ENCODE measurements at regions of chr1 and their contacts with region 1.

Region 1: GRCh38 chr1:93304716-93305138 is 41.0 kb upstream of the DR1 start:
- DNase-seq: peak; percentile 12
- ATAC-seq: peak; percentile 82
- H3K4me3 ChIP-seq: no peak overlapping the region
- H3K27ac ChIP-seq: no peak overlapping the region
- H3K4me1 ChIP-seq: no peaks in the 10 kb centered on the region
- H3K27me3 ChIP-seq: no peaks in the 10 kb centered on the region
- CTCF ChIP-seq: peak; percentile 72 to 89 (median 88)
- EP300 ChIP-seq: no peak
- POLR2A ChIP-seq: no peak
- RAD21 ChIP-seq: peak; percentile 92

Region 2: GRCh38 chr1:93288558-93288957 is 16.2 kb before region 1 on chr1:
- CTCF ChIA-PET with region 1: interaction called, 10 read pairs
- POLR2A ChIA-PET with region 1: interaction called, 4 read pairs
- RAD21 ChIA-PET with region 1: no interaction called
- SMC1A ChIA-PET with region 1: interaction called, 4 read pairs
- in situ Hi-C with region 1: no loop called
- intact Hi-C with region 1: no loop called
- DNase-seq: no peak
- ATAC-seq: no peak
- H3K4me3 ChIP-seq: no peak overlapping the region
- H3K27ac ChIP-seq: no peak overlapping the region
- H3K4me1 ChIP-seq: no peaks in the 10 kb centered on the region
- H3K27me3 ChIP-seq: no peaks in the 10 kb centered on the region
- CTCF ChIP-seq: no peak
- EP300 ChIP-seq: no peak
- POLR2A ChIP-seq: no peak
- RAD21 ChIP-seq: no peak

Region 3: DNA sequence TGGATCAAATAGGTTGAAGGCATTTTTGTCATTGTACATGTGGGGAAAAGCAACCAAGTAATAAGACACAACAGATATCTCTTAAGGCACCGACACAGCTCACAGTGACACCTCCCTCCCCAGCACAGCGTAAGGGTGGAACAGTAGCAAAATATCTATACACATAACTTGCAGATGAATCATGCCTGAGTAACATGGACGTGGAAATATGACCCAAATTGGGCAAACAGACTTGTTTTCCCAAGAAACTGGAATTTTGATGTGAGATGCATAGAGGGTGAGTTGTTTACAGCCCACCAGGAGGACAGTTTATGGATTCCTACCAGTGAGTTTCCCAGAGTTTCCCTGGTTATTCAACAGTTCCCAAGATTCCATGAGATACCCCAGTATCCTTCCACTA is 33.7 kb after region 1 on chr1:
- CTCF ChIA-PET with region 1: interaction called, 15 read pairs
- POLR2A ChIA-PET with region 1: no interaction called
- RAD21 ChIA-PET with region 1: interaction called, 4 read pairs
- SMC1A ChIA-PET with region 1: interaction called, 4 read pairs
- in situ Hi-C with region 1: no loop called
- intact Hi-C with region 1: no loop called
- DNase-seq: no peak
- ATAC-seq: no peak
- H3K4me3 ChIP-seq: no peak overlapping the region
- H3K27ac ChIP-seq: no peak overlapping the region
- H3K4me1 ChIP-seq: peaks cover 4% of the 10 kb centered on the region; the same call in 1 of the 2 replicates
- H3K27me3 ChIP-seq: no peaks in the 10 kb centered on the region
- CTCF ChIP-seq: no peak
- EP300 ChIP-seq: no peak
- POLR2A ChIP-seq: no peak
- RAD21 ChIP-seq: no peak

Region 4: DNA sequence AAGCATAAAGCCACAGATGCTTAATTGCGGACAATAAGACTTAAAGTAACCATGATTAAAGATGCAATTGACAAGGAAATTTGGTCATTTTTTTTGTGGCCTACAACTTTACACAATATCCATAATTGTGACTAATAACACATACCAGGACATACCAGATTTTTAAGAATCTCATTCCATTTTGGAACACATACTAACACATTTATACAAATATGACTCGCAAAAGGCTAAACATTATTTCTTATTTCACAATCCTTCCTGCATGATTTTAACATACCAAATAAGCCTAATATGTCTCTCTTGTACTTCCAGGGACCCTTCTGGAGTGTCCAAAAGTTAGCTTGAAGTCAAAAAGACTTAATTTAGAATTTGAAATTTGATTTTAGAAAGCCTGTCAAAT is 89.8 kb after region 1 on chr1:
- CTCF ChIA-PET with region 1: interaction called, 12 read pairs
- POLR2A ChIA-PET with region 1: no interaction called
- RAD21 ChIA-PET with region 1: no interaction called
- SMC1A ChIA-PET with region 1: interaction called, 6 read pairs
- in situ Hi-C with region 1: no loop called
- intact Hi-C with region 1: no loop called
- DNase-seq: no peak
- ATAC-seq: no peak
- H3K4me3 ChIP-seq: no peak overlapping the region
- H3K27ac ChIP-seq: no peak overlapping the region
- H3K4me1 ChIP-seq: no peaks in the 10 kb centered on the region
- H3K27me3 ChIP-seq: no peaks in the 10 kb centered on the region
- CTCF ChIP-seq: no peak
- EP300 ChIP-seq: no peak
- POLR2A ChIP-seq: no peak
- RAD21 ChIP-seq: no peak

Region 5: DNA sequence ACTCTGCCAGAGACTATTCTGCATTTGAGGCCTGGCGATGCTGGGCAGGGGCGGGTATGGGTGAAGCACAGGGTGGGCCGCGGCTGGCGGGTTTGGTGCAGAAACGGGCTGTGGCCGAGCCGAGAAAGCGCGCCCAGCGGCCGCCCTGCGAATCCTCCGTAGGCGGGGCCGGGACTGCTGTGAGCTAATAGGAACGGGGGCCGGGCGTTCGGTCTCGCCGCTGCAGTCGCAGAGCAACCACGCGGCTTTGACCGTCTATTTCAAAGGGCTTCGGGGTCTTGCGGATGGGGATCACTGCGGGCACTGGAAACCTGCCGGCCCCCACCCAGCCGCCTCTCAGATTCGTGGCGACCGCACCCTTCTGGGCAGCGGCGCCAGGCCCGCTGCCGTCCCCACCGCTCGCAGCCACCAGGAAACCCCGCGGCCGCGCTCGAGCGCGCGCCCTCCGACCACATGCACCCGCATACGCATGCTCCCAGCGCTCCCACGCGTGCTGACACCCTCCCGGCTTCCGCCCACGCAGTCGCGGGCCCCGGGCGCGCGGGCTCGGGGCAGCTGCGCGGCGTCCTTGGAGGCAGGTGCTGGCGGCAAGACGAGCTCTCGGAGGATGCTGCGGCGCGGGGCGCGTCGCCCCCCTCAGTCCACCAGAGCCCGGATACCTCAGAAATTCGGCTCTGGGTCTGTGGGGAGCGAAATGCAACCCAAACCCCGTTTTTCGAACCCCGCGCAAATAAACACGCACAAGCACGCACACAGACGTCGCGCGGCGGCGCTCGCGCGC is 541.7 kb after region 1 on chr1:
- CTCF ChIA-PET with region 1: interaction called, 18 read pairs
- POLR2A ChIA-PET with region 1: no interaction called
- RAD21 ChIA-PET with region 1: interaction called, 13 read pairs
- SMC1A ChIA-PET with region 1: interaction called, 9 read pairs
- in situ Hi-C with region 1: loop called (anchors 10 kb)
- intact Hi-C with region 1: loop called (anchors 1 kb)
- DNase-seq: no peak
- ATAC-seq: peak; percentile 78
- H3K4me3 ChIP-seq: peak overlapping the region; percentile 84
- H3K27ac ChIP-seq: peak overlapping the region; percentile 69
- H3K4me1 ChIP-seq: peaks cover 6% of the 10 kb centered on the region
- H3K27me3 ChIP-seq: no peaks in the 10 kb centered on the region
- CTCF ChIP-seq: peak; percentile 17 to 44 (median 24); a peak in 3 of 6 replicates
- EP300 ChIP-seq: no peak
- POLR2A ChIP-seq: peak; percentile 75
- RAD21 ChIP-seq: no peak